ENCODE measurements at regions of chr19 and their contacts with region 1.

Region 1: GRCh38 chr19:55258828-55259539 is at the start of gene PPP6R1:
- DNase-seq: peak; percentile 95
- H3K4me3 Mint-ChIP-seq: peak within 1 kb of the TSS; percentile 88
- H3K27ac Mint-ChIP-seq: peak within 1 kb of the TSS; percentile 99
- H3K4me1 Mint-ChIP-seq: peaks cover 16% of the 10 kb centered on the region
- H3K27me3 Mint-ChIP-seq: no peaks in the 10 kb centered on the region
- total RNA-seq, gene PPP6R1: 166 to 174 TPM

Region 2: GRCh38 chr19:55178781-55179599 is 80.0 kb before region 1 on chr19:
- CTCF ChIA-PET with region 1: interaction called, 3 read pairs
- intact Hi-C with region 1: loop called (anchors 2 kb)
- DNase-seq: peak; percentile 83
- H3K4me3 Mint-ChIP-seq: peak overlapping the region; percentile 58
- H3K27ac Mint-ChIP-seq: no peak overlapping the region
- H3K4me1 Mint-ChIP-seq: peaks cover 18% of the 10 kb centered on the region
- H3K27me3 Mint-ChIP-seq: peaks cover 69% of the 10 kb centered on the region

Region 3: GRCh38 chr19:55301459-55302317 is 42.7 kb after region 1 on chr19:
- CTCF ChIA-PET with region 1: interaction called, 8 read pairs
- intact Hi-C with region 1: loop called (anchors 1 kb)
- DNase-seq: peak; percentile 96
- H3K4me3 Mint-ChIP-seq: peak overlapping the region; percentile 78
- H3K27ac Mint-ChIP-seq: peak overlapping the region; percentile 86
- H3K4me1 Mint-ChIP-seq: peaks cover 7% of the 10 kb centered on the region
- H3K27me3 Mint-ChIP-seq: no peaks in the 10 kb centered on the region

Region 4: GRCh38 chr19:55353803-55354697 is 95.1 kb after region 1 on chr19:
- CTCF ChIA-PET with region 1: no interaction called
- intact Hi-C with region 1: no loop called
- DNase-seq: peak; percentile 76
- H3K4me3 Mint-ChIP-seq: peak overlapping the region; percentile 73
- H3K27ac Mint-ChIP-seq: no peak overlapping the region
- H3K4me1 Mint-ChIP-seq: peaks cover 15% of the 10 kb centered on the region
- H3K27me3 Mint-ChIP-seq: peaks cover 49% of the 10 kb centered on the region

Region 5: GRCh38 chr19:55407800-55408532 is 149.0 kb after region 1 on chr19:
- CTCF ChIA-PET with region 1: no interaction called
- intact Hi-C with region 1: loop called (anchors 1 kb)
- DNase-seq: peak; percentile 98
- H3K4me3 Mint-ChIP-seq: peak overlapping the region; percentile 93
- H3K27ac Mint-ChIP-seq: peak overlapping the region; percentile 96
- H3K4me1 Mint-ChIP-seq: peaks cover 27% of the 10 kb centered on the region
- H3K27me3 Mint-ChIP-seq: no peaks in the 10 kb centered on the region

Region 6: GRCh38 chr19:55599468-55600279 is 340.7 kb after region 1 on chr19 and contains the start of gene FIZ1:
- CTCF ChIA-PET with region 1: no interaction called
- intact Hi-C with region 1: loop called (anchors 1 kb)
- DNase-seq: peak; percentile 98
- H3K4me3 Mint-ChIP-seq: peak within 1 kb of the TSS; percentile 88
- H3K27ac Mint-ChIP-seq: peak within 1 kb of the TSS; percentile 99
- H3K4me1 Mint-ChIP-seq: peaks cover 31% of the 10 kb centered on the region
- H3K27me3 Mint-ChIP-seq: no peaks in the 10 kb centered on the region
- total RNA-seq, gene FIZ1: 12.8 to 14.8 TPM

Region 7: DNA sequence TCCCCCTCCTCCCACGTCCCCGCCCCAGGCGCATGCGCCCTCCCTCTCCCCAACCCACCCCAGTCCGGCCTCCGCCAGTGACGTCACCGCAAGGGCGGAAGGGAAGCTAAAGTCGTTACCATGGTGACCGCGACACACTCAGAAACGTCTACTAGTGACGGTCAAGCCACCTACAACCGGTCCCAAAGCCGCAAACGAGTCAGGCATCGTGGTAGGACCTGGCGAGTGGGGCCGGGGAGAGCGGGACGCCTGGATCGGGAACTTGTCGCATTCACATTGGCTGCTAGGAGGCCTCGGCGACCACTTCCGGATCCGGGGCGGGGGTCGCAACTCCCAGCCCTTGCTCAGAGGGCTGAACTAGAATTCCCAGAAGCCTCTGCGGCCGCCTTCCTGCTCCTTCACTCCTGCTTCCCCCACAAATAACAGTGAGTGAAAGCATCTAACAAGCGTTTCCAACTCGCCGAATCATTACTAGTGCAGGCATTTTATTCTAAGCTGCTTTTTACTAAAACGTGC is 1055.6 kb after region 1 on chr19 and contains the start of gene ZSCAN5A:
- CTCF ChIA-PET with region 1: no interaction called
- intact Hi-C with region 1: loop called (anchors 10 kb)
- DNase-seq: peak; percentile 97
- H3K4me3 Mint-ChIP-seq: peak within 1 kb of the TSS; percentile 82
- H3K27ac Mint-ChIP-seq: peak within 1 kb of the TSS; percentile 96
- H3K4me1 Mint-ChIP-seq: peaks cover 22% of the 10 kb centered on the region
- H3K27me3 Mint-ChIP-seq: no peaks in the 10 kb centered on the region
- total RNA-seq, gene ZSCAN5A: 3.7 to 4.1 TPM